ENCODE measurements at regions of chr7 and their contacts with region 1.

Region 1: DNA sequence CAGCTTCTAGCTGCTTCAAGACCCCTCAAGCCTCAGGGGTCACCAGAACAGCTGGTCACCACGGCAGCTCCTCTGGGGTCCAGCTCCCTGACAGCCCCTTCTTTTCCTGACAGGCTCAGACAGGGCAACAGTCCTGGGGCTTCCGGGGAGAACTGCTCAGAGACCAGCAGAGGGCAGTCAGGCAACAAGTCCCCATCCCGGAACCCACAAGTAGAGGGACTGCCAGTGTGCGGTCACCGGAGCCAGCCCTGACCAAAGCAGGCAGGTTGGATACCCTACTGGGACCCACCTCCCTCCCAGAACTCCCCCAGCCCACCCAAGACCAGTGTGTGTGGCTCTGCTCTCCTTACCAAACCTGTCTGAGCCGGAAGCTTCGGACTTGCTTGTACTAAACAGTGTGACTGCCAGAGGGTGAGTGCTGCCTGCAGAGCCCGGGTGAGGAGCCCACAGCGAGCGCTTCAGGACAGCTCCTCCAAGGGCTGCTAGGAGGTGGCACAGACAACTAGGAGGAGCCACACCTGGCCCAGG is 40.3 kb downstream of the YKT6 start:
- DNase-seq: peak; percentile 82
- H3K4me3 ChIP-seq: peak overlapping the region in 3 of 4 donors; percentile 23 to 38 (median 37)
- H3K27ac ChIP-seq: no peak overlapping the region
- H3K4me1 ChIP-seq: peaks cover 0 to 6% (median 4%) of the 10 kb centered on the region in 4 donors
- H3K27me3 ChIP-seq: peaks cover 0 to 9% (median 0%) of the 10 kb centered on the region in 3 donors
- CTCF ChIP-seq: peak; percentile 28 to 60 (median 56)
- EP300 ChIP-seq: no peak
- POLR2A ChIP-seq: no peak

Region 2: GRCh38 chr7:43302211-43302711 is 938.8 kb before region 1 on chr7:
- intact Hi-C with region 1: no loop called
- DNase-seq: no peak
- H3K4me3 ChIP-seq: no peak overlapping the region
- H3K27ac ChIP-seq: no peak overlapping the region
- H3K4me1 ChIP-seq: no peaks in the 10 kb centered on the region
- H3K27me3 ChIP-seq: no peaks in the 10 kb centered on the region
- CTCF ChIP-seq: no peak
- EP300 ChIP-seq: no peak
- POLR2A ChIP-seq: no peak

Region 3: DNA sequence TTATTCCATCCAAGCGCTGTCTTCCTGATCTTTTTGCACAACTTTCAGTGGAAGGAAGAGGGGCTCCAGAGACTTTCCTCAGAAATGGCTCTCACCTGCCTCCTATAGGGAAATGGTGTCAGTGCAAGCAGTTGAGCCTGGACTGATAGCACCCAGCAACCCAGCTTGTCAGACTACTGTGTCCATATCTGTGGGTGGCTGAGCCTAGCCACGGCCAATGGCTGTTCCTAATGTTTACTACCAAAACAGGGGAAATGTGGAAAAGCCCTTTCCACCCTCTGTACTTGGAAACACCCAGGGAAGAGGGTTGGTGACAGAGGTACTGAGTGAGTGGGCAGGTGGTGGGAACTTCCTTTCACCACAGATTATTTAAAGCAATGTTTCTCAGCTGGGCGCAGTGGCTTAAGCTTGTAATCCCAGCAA is 44.6 kb before region 1 on chr7:
- intact Hi-C with region 1: no loop called
- DNase-seq: peak; percentile 67
- H3K4me3 ChIP-seq: no peak overlapping the region
- H3K27ac ChIP-seq: no peak overlapping the region
- H3K4me1 ChIP-seq: peaks cover 0 to 2% (median 1%) of the 10 kb centered on the region in 4 donors
- H3K27me3 ChIP-seq: peaks cover 0 to 23% (median 5%) of the 10 kb centered on the region in 3 donors
- CTCF ChIP-seq: peak in 3 of 4 experiments; percentile 36 to 60 (median 44)
- EP300 ChIP-seq: no peak
- POLR2A ChIP-seq: no peak

Region 4: GRCh38 chr7:44477063-44477830 is 236.2 kb after region 1 on chr7:
- intact Hi-C with region 1: loop called (anchors 1 kb)
- DNase-seq: no peak
- H3K4me3 ChIP-seq: no peak overlapping the region
- H3K27ac ChIP-seq: no peak overlapping the region
- H3K4me1 ChIP-seq: peaks cover 0 to 25% (median 9%) of the 10 kb centered on the region in 4 donors
- H3K27me3 ChIP-seq: no peaks in the 10 kb centered on the region
- CTCF ChIP-seq: peak; percentile 68 to 92 (median 76)
- EP300 ChIP-seq: no peak
- POLR2A ChIP-seq: no peak

Region 5: GRCh38 chr7:44565097-44565794 is 324.2 kb after region 1 on chr7:
- intact Hi-C with region 1: loop called (anchors 1 kb)
- DNase-seq: peak; percentile 79
- H3K4me3 ChIP-seq: no peak overlapping the region
- H3K27ac ChIP-seq: peak overlapping the region in 1 of 4 donors; percentile 35
- H3K4me1 ChIP-seq: no peaks in the 10 kb centered on the region
- H3K27me3 ChIP-seq: no peaks in the 10 kb centered on the region
- CTCF ChIP-seq: peak; percentile 72 to 97 (median 94)
- EP300 ChIP-seq: no peak
- POLR2A ChIP-seq: no peak